Endothelial cell of umbilical vein (primary cell): ENCODE measurements at regions of chr12 and their contacts with region 1.

Region 1: GRCh38 chr12:94101738-94102660 is 46.4 kb upstream of the PLXNC1 start:
- DNase-seq: peak; percentile 79
- H3K4me3 ChIP-seq: peak overlapping the region; percentile 33 to 58 (median 52)
- H3K27ac ChIP-seq: no peak overlapping the region
- H3K4me1 ChIP-seq: peaks cover 22% of the 10 kb centered on the region
- H3K27me3 ChIP-seq: peaks cover 6 to 13% of the 10 kb centered on the region in 2 experiments
- CTCF ChIP-seq: peak; percentile 80 to 86
- POLR2A ChIP-seq: no peak

Region 2: GRCh38 chr12:93403988-93404803 is 697.8 kb before region 1 on chr12:
- CTCF ChIA-PET with region 1: interaction called, 10 read pairs
- POLR2A ChIA-PET with region 1: no interaction called
- dilution Hi-C with region 1: no loop called
- intact Hi-C with region 1: loop called (anchors 5 kb)
- DNase-seq: no peak
- H3K4me3 ChIP-seq: no peak overlapping the region
- H3K27ac ChIP-seq: no peak overlapping the region
- H3K4me1 ChIP-seq: peaks cover 5% of the 10 kb centered on the region
- H3K27me3 ChIP-seq: no peaks in the 10 kb centered on the region
- CTCF ChIP-seq: no peak
- POLR2A ChIP-seq: no peak

Region 3: DNA sequence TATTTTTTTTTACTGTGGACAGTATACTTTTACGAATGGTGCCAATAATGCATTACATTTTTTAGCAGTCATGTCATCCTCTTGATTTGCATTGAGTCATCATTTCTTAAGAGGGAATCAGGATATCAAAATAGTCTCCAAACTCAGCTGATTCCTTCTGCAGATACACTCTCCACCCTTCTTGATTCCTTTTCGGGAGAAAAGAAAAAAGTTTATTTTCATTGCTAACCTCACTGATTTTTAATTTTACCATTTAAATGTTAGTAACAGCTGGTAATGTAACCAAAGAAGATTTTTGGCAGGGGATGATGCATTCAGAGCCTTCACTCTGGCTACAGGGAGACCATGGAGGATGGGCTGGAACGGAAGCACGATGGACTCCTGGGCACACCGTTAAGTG is 587.1 kb before region 1 on chr12:
- CTCF ChIA-PET with region 1: interaction called, 79 read pairs
- POLR2A ChIA-PET with region 1: no interaction called
- dilution Hi-C with region 1: no loop called
- intact Hi-C with region 1: no loop called
- DNase-seq: no peak
- H3K4me3 ChIP-seq: no peak overlapping the region
- H3K27ac ChIP-seq: no peak overlapping the region
- H3K4me1 ChIP-seq: no peaks in the 10 kb centered on the region
- H3K27me3 ChIP-seq: no peaks in the 10 kb centered on the region
- CTCF ChIP-seq: no peak
- POLR2A ChIP-seq: no peak

Region 4: GRCh38 chr12:93569656-93570551 is 532.1 kb before region 1 on chr12:
- CTCF ChIA-PET with region 1: interaction called, 366 read pairs
- POLR2A ChIA-PET with region 1: no interaction called
- dilution Hi-C with region 1: no loop called
- intact Hi-C with region 1: loop called (anchors 1 kb)
- DNase-seq: peak; percentile 74
- H3K4me3 ChIP-seq: peak overlapping the region; percentile 35 to 71 (median 68)
- H3K27ac ChIP-seq: no peak overlapping the region
- H3K4me1 ChIP-seq: peaks cover 24% of the 10 kb centered on the region
- H3K27me3 ChIP-seq: peaks cover 30 to 37% of the 10 kb centered on the region in 2 experiments
- CTCF ChIP-seq: peak; percentile 54 to 91
- POLR2A ChIP-seq: no peak

Region 5: GRCh38 chr12:93766796-93767523 is 335.0 kb before region 1 on chr12:
- CTCF ChIA-PET with region 1: interaction called, 294 read pairs
- POLR2A ChIA-PET with region 1: no interaction called
- dilution Hi-C with region 1: no loop called
- intact Hi-C with region 1: loop called (anchors 1 kb)
- DNase-seq: peak; percentile 68
- H3K4me3 ChIP-seq: no peak overlapping the region
- H3K27ac ChIP-seq: no peak overlapping the region
- H3K4me1 ChIP-seq: peaks cover 7% of the 10 kb centered on the region
- H3K27me3 ChIP-seq: no peaks in the 10 kb centered on the region
- CTCF ChIP-seq: peak; percentile 46 to 53
- POLR2A ChIP-seq: no peak

Region 6: GRCh38 chr12:93979189-93979588 is 122.8 kb before region 1 on chr12:
- CTCF ChIA-PET with region 1: interaction called, 27 read pairs
- POLR2A ChIA-PET with region 1: no interaction called
- dilution Hi-C with region 1: no loop called
- intact Hi-C with region 1: loop called (anchors 2 kb)
- DNase-seq: peak; percentile 43
- H3K4me3 ChIP-seq: no peak overlapping the region
- H3K27ac ChIP-seq: no peak overlapping the region
- H3K4me1 ChIP-seq: no peaks in the 10 kb centered on the region
- H3K27me3 ChIP-seq: peaks cover 3 to 9% of the 10 kb centered on the region in 2 experiments
- CTCF ChIP-seq: peak; percentile 26 to 48
- POLR2A ChIP-seq: no peak